Prostate gland (tissue), 2 donors: ENCODE measurements at regions of chr1 and their contacts with region 1.

Region 1: DNA sequence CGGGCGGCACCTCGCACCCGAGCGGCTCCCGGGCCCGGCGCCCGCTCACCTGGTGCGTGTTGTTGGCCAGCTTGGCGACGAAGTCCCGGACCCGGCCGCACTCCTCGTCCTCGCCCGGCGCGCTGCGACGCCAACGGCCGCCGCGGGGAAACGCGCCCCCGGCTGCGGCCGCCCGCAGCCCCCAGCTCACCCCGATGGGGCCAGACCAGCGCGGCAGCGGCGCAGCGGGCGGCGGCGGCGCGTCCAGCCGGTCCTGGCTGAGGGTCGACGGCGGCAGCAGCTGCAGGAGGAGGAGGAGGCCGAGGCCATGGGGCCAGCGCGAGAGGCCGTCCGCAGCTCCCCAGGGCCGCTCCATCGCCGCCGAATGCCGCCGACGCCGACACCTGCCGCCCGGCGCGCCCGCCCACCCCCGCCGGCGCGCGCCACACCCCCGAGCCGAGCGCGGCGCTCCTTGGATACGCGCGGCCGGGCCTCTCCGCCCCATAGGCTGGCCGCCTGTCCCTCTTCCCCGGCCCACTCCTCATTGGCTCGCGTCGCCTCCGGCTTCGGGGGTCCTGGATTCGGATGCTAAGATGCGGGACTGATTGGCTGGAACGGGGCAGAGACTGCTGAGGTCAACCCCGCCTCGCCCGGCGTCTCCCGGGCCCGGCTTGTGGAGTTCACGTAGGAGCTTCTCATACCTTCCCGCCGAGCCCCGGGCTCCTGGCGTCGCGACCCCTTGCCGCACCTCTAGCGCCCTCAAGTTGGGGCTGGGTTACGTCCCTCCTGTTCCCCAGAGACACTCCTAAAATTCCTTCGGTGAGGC is at the start of gene SORT1:
- DNase-seq: peak; percentile 82
- H3K4me3 ChIP-seq: peak within 1 kb of the TSS; percentile 61 to 79
- H3K27ac ChIP-seq: peak within 1 kb of the TSS; percentile 62 to 72
- H3K4me1 ChIP-seq: peaks cover 15% of the 10 kb centered on the region
- H3K27me3 ChIP-seq: no peaks in the 10 kb centered on the region
- CTCF ChIP-seq: peak in 1 of 4 experiments; percentile 6
- POLR2A ChIP-seq: peak; percentile 55
- total RNA-seq, gene SORT1: 34.0 to 164 TPM

Region 2: DNA sequence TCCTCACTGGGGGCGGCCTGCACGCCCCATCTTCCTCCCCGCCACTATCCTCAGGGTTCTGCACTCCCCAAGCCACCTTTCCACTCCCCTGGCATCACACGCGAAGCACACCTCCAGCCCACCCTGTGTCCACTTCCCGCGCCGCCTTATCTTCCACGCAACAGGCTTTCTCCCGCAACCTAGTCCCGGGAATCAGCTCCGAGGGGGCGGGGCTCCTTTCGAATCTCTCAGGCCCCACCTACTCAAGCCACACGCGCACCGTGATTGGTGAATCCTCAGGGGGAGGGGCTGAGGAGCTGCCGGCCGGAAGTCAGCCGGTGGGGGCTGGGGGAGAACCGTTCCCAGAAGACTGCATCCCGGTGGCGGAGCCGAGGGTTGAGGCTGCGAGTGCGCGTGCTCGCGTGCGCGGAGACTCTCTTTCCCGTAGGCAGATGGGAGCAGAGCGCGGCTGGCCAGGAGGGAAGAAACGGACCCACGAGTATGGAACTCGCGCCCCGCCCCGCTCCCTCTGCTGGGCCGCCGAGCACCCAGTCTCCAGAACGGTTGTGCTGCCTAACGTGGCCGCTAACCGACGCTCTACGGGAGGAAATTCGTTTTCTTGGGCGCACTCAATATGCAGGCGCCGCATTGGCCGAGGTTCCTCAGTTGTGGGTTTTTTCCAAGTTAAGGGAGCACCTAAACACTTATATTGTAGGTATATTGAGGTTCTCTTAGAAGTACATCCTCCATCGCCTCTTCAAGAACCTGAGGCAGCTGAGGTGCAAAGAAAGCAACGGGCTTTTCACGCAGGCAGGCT is 114.6 kb before region 1 on chr1 and contains the start of gene PSRC1:
- intact Hi-C with region 1: loop called (anchors 2 kb)
- DNase-seq: peak; percentile 98
- H3K4me3 ChIP-seq: peak within 1 kb of the TSS; percentile 44 to 48
- H3K27ac ChIP-seq: peak within 1 kb of the TSS; percentile 85 to 87
- H3K4me1 ChIP-seq: peaks cover 4% of the 10 kb centered on the region
- H3K27me3 ChIP-seq: no peaks in the 10 kb centered on the region
- CTCF ChIP-seq: peak in 3 of 4 experiments; percentile 31 to 68 (median 65)
- POLR2A ChIP-seq: peak; percentile 71
- total RNA-seq, gene PSRC1: 9.1 to 40.0 TPM

Region 3: GRCh38 chr1:109341944-109342930 is 55.5 kb before region 1 on chr1:
- intact Hi-C with region 1: no loop called
- DNase-seq: peak; percentile 8
- H3K4me3 ChIP-seq: no peak overlapping the region
- H3K27ac ChIP-seq: no peak overlapping the region
- H3K4me1 ChIP-seq: no peaks in the 10 kb centered on the region
- H3K27me3 ChIP-seq: no peaks in the 10 kb centered on the region
- CTCF ChIP-seq: no peak
- POLR2A ChIP-seq: no peak

Region 4: GRCh38 chr1:109370712-109371455 is 26.9 kb before region 1 on chr1:
- intact Hi-C with region 1: loop called (anchors 2 kb)
- DNase-seq: peak; percentile 27
- H3K4me3 ChIP-seq: no peak overlapping the region
- H3K27ac ChIP-seq: peak overlapping the region; percentile 60 to 68
- H3K4me1 ChIP-seq: no peaks in the 10 kb centered on the region
- H3K27me3 ChIP-seq: no peaks in the 10 kb centered on the region
- CTCF ChIP-seq: no peak
- POLR2A ChIP-seq: no peak